Heart left ventricle (tissue), 16 donors: ENCODE measurements at regions of chr15 and their contacts with region 1.

Region 1: DNA sequence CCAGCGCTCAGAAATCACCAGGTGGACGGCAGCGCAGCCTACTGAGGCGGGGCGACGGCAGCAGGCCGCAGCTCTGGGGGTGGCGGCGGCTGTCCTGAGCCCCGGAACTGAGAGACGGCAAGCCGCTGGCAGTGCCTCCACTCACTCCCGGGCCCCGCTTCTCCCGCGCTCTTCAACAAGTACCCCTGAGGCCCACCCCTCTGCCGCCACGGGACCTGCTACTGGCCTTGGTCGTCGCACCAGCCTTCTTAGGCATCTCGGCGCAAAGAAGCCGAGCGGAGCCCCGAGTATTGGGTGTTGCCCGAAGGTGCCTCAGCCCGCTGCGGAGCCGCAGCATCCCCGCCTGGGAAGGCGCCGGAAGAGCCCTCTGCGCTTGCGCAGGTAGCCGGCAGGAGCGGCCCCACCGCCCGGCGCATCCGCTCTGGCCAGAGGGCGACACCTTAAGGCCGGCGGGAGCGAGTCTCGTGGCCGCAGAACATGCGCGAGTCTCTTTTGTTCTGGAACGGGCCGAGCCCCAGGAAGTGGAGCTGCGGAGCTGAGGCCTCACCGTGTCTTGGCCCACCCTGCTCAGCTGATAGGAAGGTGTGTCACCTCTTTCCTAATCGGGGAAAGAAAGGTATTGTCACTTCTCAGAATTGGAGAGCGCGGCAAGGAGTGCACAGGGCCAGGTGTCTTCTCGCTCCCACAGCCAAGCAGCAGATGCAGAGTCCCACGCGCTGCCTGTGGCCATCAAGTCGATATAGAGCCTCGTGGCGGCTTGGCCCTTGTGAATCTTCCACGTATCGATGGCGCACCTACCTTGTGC is at the start of gene C15orf40:
- DNase-seq: peak; percentile 91 to 95 (median 94)
- ATAC-seq: peak; percentile 96 to 99 (median 98)
- H3K4me3 ChIP-seq: peak within 1 kb of the TSS; percentile 67 to 100 (median 89)
- H3K27ac ChIP-seq: peak within 1 kb of the TSS; percentile 14 to 90 (median 82)
- H3K4me1 ChIP-seq: peaks cover 0 to 31% (median 21%) of the 10 kb centered on the region in 12 donors
- H3K27me3 ChIP-seq: no peaks in the 10 kb centered on the region
- CTCF ChIP-seq: peak; percentile 41 to 87 (median 70)
- POLR2A ChIP-seq: peak in 1 of 2 donors; percentile 71
- total RNA-seq, gene C15orf40: 6.0 to 17.0 (median 10.5) TPM

Region 2: DNA sequence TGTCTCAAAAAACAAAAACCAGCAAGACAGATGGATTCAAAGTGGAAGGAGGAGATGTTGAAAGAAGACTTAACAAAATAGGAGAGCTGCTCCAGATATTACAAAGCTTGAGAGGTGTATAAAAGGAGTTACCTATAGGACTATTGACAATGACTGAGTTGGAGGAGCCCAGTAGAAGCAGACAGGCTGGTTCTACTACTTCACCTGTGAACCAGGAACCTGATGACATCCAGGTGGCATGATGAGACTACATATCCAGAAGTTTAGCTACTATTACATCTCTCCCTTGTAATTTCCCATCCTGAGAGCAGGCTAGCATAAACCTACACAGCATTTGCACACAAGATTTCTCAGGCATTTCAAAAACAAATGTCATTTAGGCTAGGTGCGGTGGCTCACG is 413.7 kb before region 1 on chr15:
- intact Hi-C with region 1: no loop called
- DNase-seq: no peak
- ATAC-seq: no peak
- H3K4me3 ChIP-seq: no peak overlapping the region
- H3K27ac ChIP-seq: no peak overlapping the region
- H3K4me1 ChIP-seq: no peaks in the 10 kb centered on the region
- H3K27me3 ChIP-seq: peaks cover 0 to 13% (median 0%) of the 10 kb centered on the region in 9 donors
- CTCF ChIP-seq: no peak
- POLR2A ChIP-seq: no peak

Region 3: GRCh38 chr15:82856397-82857170 is 154.9 kb before region 1 on chr15:
- intact Hi-C with region 1: no loop called
- DNase-seq: no peak
- ATAC-seq: no peak
- H3K4me3 ChIP-seq: no peak overlapping the region
- H3K27ac ChIP-seq: peak overlapping the region in 3 of 12 donors; percentile 27 to 46 (median 42)
- H3K4me1 ChIP-seq: peaks cover 0 to 10% (median 0%) of the 10 kb centered on the region in 12 donors
- H3K27me3 ChIP-seq: no peaks in the 10 kb centered on the region
- CTCF ChIP-seq: no peak
- POLR2A ChIP-seq: no peak

Region 4: GRCh38 chr15:83066734-83067637 is 55.5 kb after region 1 on chr15 and contains the start of gene BTBD1:
- intact Hi-C with region 1: loop called in 8 of 10 experiments (anchors 1 to 10 kb)
- DNase-seq: peak; percentile 93 to 98 (median 96)
- ATAC-seq: peak; percentile 97 to 99 (median 98)
- H3K4me3 ChIP-seq: peak within 1 kb of the TSS; percentile 70 to 98 (median 94)
- H3K27ac ChIP-seq: peak within 1 kb of the TSS; percentile 93 to 99 (median 98)
- H3K4me1 ChIP-seq: peaks cover 0 to 47% (median 38%) of the 10 kb centered on the region in 12 donors
- H3K27me3 ChIP-seq: no peaks in the 10 kb centered on the region
- CTCF ChIP-seq: peak in 6 of 12 donors; percentile 6 to 35 (median 20)
- POLR2A ChIP-seq: peak; percentile 62 to 91
- total RNA-seq, gene BTBD1: 109 to 192 (median 140) TPM